A673 (cell line): ENCODE measurements at regions of chrX and their contacts with region 1.

Region 1: GRCh38 chrX:10615931-10616775 is 4.2 kb downstream of the MID1 start:
- DNase-seq: peak; percentile 58
- H3K4me3 ChIP-seq: no peak overlapping the region
- H3K27ac ChIP-seq: no peak overlapping the region
- H3K4me1 ChIP-seq: peaks cover 12% of the 10 kb centered on the region
- H3K27me3 ChIP-seq: no peaks in the 10 kb centered on the region
- CTCF ChIP-seq: peak; percentile 65

Region 2: DNA sequence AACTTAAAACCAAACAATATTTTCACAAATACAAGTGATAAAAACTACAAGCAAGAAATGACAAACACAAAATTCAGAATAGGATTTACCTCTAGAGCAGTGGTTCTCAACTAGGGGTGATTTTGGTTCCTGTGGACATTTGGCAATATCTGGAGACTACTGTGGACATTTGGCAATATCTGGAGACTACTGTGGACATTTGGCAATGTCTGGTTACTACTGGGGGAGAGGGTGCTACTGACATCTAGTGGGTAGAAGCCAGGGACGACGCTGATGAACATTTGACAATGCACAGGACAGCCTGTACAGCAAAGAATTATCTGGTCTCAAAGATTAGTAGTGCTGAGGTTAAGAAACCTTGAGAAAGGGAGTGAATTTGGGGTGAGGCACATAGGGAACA is 289.6 kb before region 1 on chrX:
- CTCF ChIA-PET with region 1: no interaction called
- POLR2A ChIA-PET with region 1: no interaction called
- intact Hi-C with region 1: loop called (anchors 10 kb)
- DNase-seq: peak; percentile 23
- H3K4me3 ChIP-seq: no peak overlapping the region
- H3K27ac ChIP-seq: no peak overlapping the region
- H3K4me1 ChIP-seq: no peaks in the 10 kb centered on the region
- H3K27me3 ChIP-seq: no peaks in the 10 kb centered on the region
- CTCF ChIP-seq: peak; percentile 38